ENCODE measurements at regions of chr20 and their contacts with region 1.

Region 1: DNA sequence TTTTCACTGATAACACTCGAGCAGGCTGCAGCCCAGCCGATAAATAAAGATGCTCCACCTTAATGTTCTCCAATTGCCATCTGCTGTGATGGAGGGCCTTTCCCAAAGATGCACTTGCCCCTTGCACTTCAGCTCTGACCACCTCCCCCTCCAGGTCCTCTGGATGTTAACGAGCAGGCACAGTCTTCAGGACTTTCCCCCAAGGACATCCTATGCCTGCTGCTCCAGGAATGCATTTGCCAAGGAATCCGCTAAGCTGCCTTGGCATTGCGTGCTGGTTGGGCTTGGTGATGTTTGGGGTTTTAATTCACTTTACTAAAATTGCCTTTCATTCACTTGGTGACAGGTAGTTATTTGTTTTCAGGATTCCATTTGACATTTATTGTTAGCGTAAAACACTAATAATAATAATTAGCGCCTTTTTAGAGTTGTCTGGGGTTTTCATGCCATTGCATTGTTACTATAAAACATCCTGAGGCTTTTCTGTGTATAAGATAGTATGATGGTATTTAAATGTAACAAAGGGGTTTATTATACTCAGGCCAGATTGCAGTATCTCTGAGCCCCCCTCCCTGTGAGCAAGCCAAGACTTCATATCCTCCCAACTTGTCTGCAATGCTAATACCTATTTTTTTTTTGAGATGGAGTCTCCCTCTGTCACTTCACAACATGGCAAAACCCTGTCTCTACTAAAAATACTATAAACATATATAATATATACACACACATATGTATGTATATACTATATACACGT is 66.7 kb upstream of the TSHZ2 start:
- DNase-seq: no peak
- ATAC-seq: no peak
- H3K4me3 ChIP-seq: no peak overlapping the region
- H3K4me3 Mint-ChIP-seq: no peak overlapping the region
- H3K27ac ChIP-seq: no peak overlapping the region
- H3K27ac Mint-ChIP-seq: no peak overlapping the region
- H3K4me1 ChIP-seq: no peaks in the 10 kb centered on the region
- H3K4me1 Mint-ChIP-seq: no peaks in the 10 kb centered on the region
- H3K27me3 ChIP-seq: peaks cover 2% of the 10 kb centered on the region
- H3K27me3 Mint-ChIP-seq: peaks cover 10 to 17% of the 10 kb centered on the region in 2 donors
- CTCF ChIP-seq: no peak

Region 2: GRCh38 chr20:53050338-53050737 is 144.9 kb after region 1 on chr20:
- intact Hi-C with region 1: loop called (anchors 10 kb)
- DNase-seq: no peak
- ATAC-seq: no peak
- H3K4me3 ChIP-seq: no peak overlapping the region
- H3K4me3 Mint-ChIP-seq: no peak overlapping the region
- H3K27ac ChIP-seq: no peak overlapping the region
- H3K27ac Mint-ChIP-seq: no peak overlapping the region
- H3K4me1 ChIP-seq: no peaks in the 10 kb centered on the region
- H3K4me1 Mint-ChIP-seq: no peaks in the 10 kb centered on the region
- H3K27me3 ChIP-seq: no peaks in the 10 kb centered on the region
- H3K27me3 Mint-ChIP-seq: peaks cover 2 to 9% of the 10 kb centered on the region in 2 donors
- CTCF ChIP-seq: no peak

Measured in natural killer cell (primary cell).